IMR-90 (cell line): ENCODE measurements at regions of chr6 and their contacts with region 1.

Region 1: GRCh38 chr6:42547407-42548329 is 16.2 kb upstream of the UBR2 start:
- DNase-seq: peak; percentile 73
- ATAC-seq: peak; percentile 99
- H3K4me3 ChIP-seq: peak overlapping the region; percentile 49
- H3K27ac ChIP-seq: peak overlapping the region; percentile 62
- H3K4me1 ChIP-seq: 0 out of 2 replicates have a peak, but pooled peaks cover 3% of the 10 kb centered on the region
- H3K27me3 ChIP-seq: no peaks in the 10 kb centered on the region
- CTCF ChIP-seq: peak; percentile 95
- POLR2A ChIP-seq: peak; percentile 53; the same call in 1 of the 2 replicates
- RAD21 ChIP-seq: peak; percentile 97

Region 2: DNA sequence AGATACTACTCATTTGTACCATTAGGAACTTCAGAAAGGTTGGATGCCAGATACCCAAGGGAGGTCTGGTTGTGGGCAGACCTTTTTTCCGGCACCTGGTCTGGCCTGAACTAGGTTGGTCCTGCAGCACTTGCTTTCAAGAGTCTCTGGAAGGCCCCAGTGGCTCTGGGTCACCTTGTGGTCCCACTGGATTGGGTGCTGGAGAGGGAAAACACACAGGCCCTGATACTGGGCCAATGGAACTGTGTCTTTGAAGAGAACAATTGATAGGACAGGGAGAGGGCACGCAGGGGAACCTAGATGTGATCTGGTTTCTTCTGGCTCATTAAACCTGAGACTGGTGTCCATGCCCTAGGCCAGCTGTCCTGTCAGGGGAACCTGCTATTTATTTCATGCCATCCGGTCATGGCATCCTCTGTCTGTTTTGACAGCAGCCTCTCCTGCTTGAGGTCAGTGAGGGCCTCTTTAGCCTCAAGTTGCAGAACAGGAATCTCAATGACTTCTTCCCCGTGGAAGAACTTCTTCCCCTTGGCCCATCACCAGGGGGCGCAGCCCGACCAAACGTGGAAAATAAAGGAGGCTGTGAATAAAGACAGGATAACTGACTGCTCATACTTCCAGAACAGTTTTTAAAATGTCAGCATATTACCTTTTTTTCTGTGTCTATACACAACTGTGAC is 472.4 kb before region 1 on chr6:
- CTCF ChIA-PET with region 1: no interaction called
- POLR2A ChIA-PET with region 1: no interaction called
- dilution Hi-C with region 1: no loop called
- in situ Hi-C with region 1: loop called (anchors 10 kb)
- intact Hi-C with region 1: loop called (anchors 1 kb)
- DNase-seq: peak; percentile 69
- ATAC-seq: peak; percentile 93
- H3K4me3 ChIP-seq: no peak overlapping the region
- H3K27ac ChIP-seq: no peak overlapping the region
- H3K4me1 ChIP-seq: no peaks in the 10 kb centered on the region
- H3K27me3 ChIP-seq: no peaks in the 10 kb centered on the region
- CTCF ChIP-seq: peak; percentile 96
- POLR2A ChIP-seq: no peak
- RAD21 ChIP-seq: peak; percentile 96

Region 3: DNA sequence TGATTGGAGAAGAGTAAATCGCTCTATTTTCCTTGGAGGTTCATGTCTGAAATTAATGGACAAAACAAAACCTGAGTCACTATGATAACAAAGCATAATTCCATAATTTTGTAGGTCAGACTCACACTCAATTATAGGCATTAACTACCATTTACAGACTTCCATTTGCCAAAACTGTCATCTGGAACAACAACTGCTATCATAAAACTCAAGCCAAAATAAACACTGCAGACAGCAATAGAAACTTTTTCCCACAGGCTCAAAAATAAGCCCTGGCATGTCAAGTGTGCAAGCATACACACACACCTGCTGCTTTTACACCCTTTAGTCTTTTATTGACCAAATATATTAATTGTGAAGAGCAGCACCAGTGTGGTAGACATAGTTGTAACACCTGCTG is 337.1 kb before region 1 on chr6:
- CTCF ChIA-PET with region 1: interaction called, 18 read pairs
- POLR2A ChIA-PET with region 1: no interaction called
- dilution Hi-C with region 1: no loop called
- in situ Hi-C with region 1: no loop called
- intact Hi-C with region 1: no loop called
- DNase-seq: no peak
- ATAC-seq: no peak
- H3K4me3 ChIP-seq: no peak overlapping the region
- H3K27ac ChIP-seq: no peak overlapping the region
- H3K4me1 ChIP-seq: no peaks in the 10 kb centered on the region
- H3K27me3 ChIP-seq: no peaks in the 10 kb centered on the region
- CTCF ChIP-seq: no peak
- POLR2A ChIP-seq: no peak
- RAD21 ChIP-seq: no peak

Region 4: GRCh38 chr6:42217519-42218367 is 329.9 kb before region 1 on chr6 and contains the start of gene MRPS10:
- CTCF ChIA-PET with region 1: interaction called, 18 read pairs
- POLR2A ChIA-PET with region 1: no interaction called
- dilution Hi-C with region 1: no loop called
- in situ Hi-C with region 1: no loop called
- intact Hi-C with region 1: loop called (anchors 1 kb)
- DNase-seq: peak; percentile 94
- ATAC-seq: peak; percentile 98
- H3K4me3 ChIP-seq: peak within 1 kb of the TSS; percentile 82
- H3K27ac ChIP-seq: peak within 1 kb of the TSS; percentile 83
- H3K4me1 ChIP-seq: peaks cover 2% of the 10 kb centered on the region; the same call in 1 of the 2 replicates
- H3K27me3 ChIP-seq: no peaks in the 10 kb centered on the region
- CTCF ChIP-seq: no peak
- POLR2A ChIP-seq: peak; percentile 85
- RAD21 ChIP-seq: no peak
- total RNA-seq, gene MRPS10: 47.0 and 71.1 TPM in 2 replicates

Region 5: GRCh38 chr6:42260972-42261371 is 286.7 kb before region 1 on chr6:
- CTCF ChIA-PET with region 1: interaction called, 5 read pairs
- POLR2A ChIA-PET with region 1: no interaction called
- dilution Hi-C with region 1: no loop called
- in situ Hi-C with region 1: loop called (anchors 5 kb)
- intact Hi-C with region 1: loop called (anchors 5 kb)
- DNase-seq: no peak
- ATAC-seq: peak; percentile 42
- H3K4me3 ChIP-seq: no peak overlapping the region
- H3K27ac ChIP-seq: peak overlapping the region; percentile 15; the same call in 1 of the 2 replicates
- H3K4me1 ChIP-seq: peaks cover 15% of the 10 kb centered on the region
- H3K27me3 ChIP-seq: no peaks in the 10 kb centered on the region
- CTCF ChIP-seq: peak; percentile 47
- POLR2A ChIP-seq: no peak
- RAD21 ChIP-seq: peak; percentile 64

Region 6: GRCh38 chr6:42453031-42453653 is 94.5 kb before region 1 on chr6:
- CTCF ChIA-PET with region 1: interaction called, 14 read pairs
- POLR2A ChIA-PET with region 1: no interaction called
- dilution Hi-C with region 1: no loop called
- in situ Hi-C with region 1: no loop called
- intact Hi-C with region 1: loop called (anchors 1 kb)
- DNase-seq: peak; percentile 90
- ATAC-seq: peak; percentile 86
- H3K4me3 ChIP-seq: peak overlapping the region; percentile 88
- H3K27ac ChIP-seq: peak overlapping the region; percentile 100
- H3K4me1 ChIP-seq: peaks cover 7% of the 10 kb centered on the region
- H3K27me3 ChIP-seq: no peaks in the 10 kb centered on the region
- CTCF ChIP-seq: no peak
- POLR2A ChIP-seq: no peak
- RAD21 ChIP-seq: 0 out of 2 replicates have a peak, but pooled peaks have one; percentile 7

Region 7: DNA sequence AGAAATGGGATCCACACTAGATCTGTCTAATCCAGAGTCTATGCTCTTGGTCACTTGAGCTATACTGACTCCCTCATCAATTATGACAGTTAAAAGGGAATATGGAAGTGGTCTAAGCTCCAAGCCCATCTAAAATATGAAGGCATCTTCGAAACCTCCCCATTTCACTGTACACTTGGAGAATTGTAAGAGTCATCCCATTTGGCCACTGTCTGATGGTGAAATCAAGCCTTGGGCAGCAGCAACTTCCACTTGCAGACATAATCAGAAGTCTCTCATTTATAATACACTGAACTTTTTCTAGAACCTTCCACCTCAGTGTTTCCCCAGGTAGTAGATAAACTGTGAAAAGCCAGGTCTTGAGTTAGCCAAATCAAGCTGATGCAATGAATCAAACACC is 10.1 kb before region 1 on chr6:
- CTCF ChIA-PET with region 1: interaction called, 10 read pairs
- POLR2A ChIA-PET with region 1: no interaction called
- dilution Hi-C with region 1: no loop called
- in situ Hi-C with region 1: no loop called
- intact Hi-C with region 1: no loop called
- DNase-seq: no peak
- ATAC-seq: no peak
- H3K4me3 ChIP-seq: no peak overlapping the region
- H3K27ac ChIP-seq: no peak overlapping the region
- H3K4me1 ChIP-seq: no peaks in the 10 kb centered on the region
- H3K27me3 ChIP-seq: no peaks in the 10 kb centered on the region; the same call in 1 of the 2 replicates
- CTCF ChIP-seq: no peak
- POLR2A ChIP-seq: no peak
- RAD21 ChIP-seq: no peak

Region 8: DNA sequence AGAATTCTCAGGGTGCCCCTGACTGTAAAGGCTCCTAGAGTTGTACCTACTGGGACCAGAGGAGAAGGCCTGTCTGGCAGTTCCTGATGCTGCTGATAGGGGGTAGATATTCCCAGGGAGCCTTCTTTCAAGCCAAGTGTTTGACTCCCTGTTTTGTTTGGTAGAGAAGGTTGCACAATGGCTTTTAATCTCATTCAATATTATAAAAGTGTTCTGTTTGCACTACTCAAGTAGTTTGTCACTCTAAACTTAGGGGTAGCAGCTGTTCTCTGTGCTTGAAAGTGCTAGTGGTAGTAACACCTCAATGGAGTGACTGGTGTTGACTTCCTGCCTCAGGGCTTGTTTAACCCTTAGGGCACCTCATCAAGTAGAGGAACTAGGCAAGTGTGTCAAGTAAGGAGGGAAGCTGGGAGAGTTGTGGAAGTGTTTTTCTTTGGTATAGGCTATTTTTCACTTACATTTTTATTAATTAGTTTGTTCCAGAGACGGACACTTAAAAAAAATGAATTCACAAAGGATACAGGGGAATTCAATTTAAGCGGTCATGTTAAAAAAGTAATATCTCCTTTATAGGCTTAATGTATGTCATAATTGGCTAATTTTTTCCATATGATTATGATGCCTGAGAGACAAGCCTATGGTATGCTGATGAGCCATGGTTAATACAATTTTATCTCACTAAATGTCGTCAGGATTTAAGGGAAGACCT is 272.3 kb after region 1 on chr6:
- CTCF ChIA-PET with region 1: no interaction called
- POLR2A ChIA-PET with region 1: no interaction called
- dilution Hi-C with region 1: no loop called
- in situ Hi-C with region 1: no loop called
- intact Hi-C with region 1: no loop called
- DNase-seq: no peak
- ATAC-seq: no peak
- H3K4me3 ChIP-seq: no peak overlapping the region
- H3K27ac ChIP-seq: no peak overlapping the region
- H3K4me1 ChIP-seq: no peaks in the 10 kb centered on the region; the same call in 1 of the 2 replicates
- H3K27me3 ChIP-seq: no peaks in the 10 kb centered on the region
- CTCF ChIP-seq: peak; percentile 20; the same call in 1 of the 2 replicates
- POLR2A ChIP-seq: no peak
- RAD21 ChIP-seq: no peak